Mammary epithelial cell (primary cell): ENCODE measurements at regions of chr1 and their contacts with region 1.

Region 1: DNA sequence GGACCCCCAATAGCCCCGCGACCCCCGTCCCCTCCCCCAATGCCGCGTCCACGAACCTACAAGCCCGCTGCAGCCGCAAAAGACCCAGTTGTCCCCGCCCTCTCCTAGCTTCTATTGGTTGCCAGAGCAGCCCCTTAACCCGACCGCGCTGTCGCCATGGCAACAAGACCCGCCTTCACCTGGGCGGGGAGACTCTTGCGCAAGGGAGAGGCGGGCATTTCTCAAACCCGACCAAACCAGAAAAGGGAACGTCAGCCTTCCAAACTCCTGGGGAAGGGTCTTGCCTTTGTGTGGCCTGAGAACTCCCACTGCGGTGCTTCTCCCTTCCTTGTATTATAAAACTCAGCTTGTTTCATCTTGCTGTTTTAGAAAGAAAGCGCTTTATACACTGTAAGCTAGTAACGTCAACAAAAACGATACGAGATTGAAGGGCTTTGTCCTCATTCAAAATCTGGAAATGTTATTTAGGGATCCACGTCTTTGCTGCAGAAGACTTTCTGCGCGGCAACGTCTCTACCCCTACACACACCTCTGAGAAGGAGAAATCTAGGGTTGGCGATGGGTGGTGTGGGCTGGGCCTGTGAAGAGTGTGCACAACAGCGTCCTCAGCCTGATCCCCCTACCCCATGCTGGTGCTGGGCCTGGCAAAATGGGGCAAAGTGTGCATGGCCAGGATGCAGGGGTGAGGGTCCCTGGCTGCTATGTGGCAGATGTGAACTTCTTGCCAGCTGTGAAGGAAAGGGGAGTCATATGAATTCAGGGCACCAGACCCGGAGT is at the start of gene TMEM9:
- DNase-seq: peak; percentile 84
- H3K4me3 ChIP-seq: peak within 1 kb of the TSS; percentile 39 to 79 (median 67)
- H3K27ac ChIP-seq: no peak within 1 kb of the TSS
- H3K4me1 ChIP-seq: peaks cover 12% of the 10 kb centered on the region
- H3K27me3 ChIP-seq: no peaks in the 10 kb centered on the region
- CTCF ChIP-seq: no peak
- total RNA-seq, gene TMEM9: 54.2 to 65.3 TPM

Region 2: GRCh38 chr1:200866521-200866920 is 288.1 kb before region 1 on chr1:
- CTCF ChIA-PET with region 1: no interaction called
- dilution Hi-C with region 1: no loop called
- in situ Hi-C with region 1: no loop called
- intact Hi-C with region 1: no loop called
- DNase-seq: no peak
- H3K4me3 ChIP-seq: no peak overlapping the region
- H3K27ac ChIP-seq: no peak overlapping the region
- H3K4me1 ChIP-seq: no peaks in the 10 kb centered on the region
- H3K27me3 ChIP-seq: no peaks in the 10 kb centered on the region
- CTCF ChIP-seq: no peak

Region 3: GRCh38 chr1:201077736-201078135 is 76.8 kb before region 1 on chr1:
- CTCF ChIA-PET with region 1: no interaction called
- dilution Hi-C with region 1: loop called (anchors 5 kb)
- in situ Hi-C with region 1: no loop called
- intact Hi-C with region 1: no loop called
- DNase-seq: no peak
- H3K4me3 ChIP-seq: no peak overlapping the region
- H3K27ac ChIP-seq: no peak overlapping the region
- H3K4me1 ChIP-seq: no peaks in the 10 kb centered on the region
- H3K27me3 ChIP-seq: peaks cover 2% of the 10 kb centered on the region
- CTCF ChIP-seq: no peak

Region 4: DNA sequence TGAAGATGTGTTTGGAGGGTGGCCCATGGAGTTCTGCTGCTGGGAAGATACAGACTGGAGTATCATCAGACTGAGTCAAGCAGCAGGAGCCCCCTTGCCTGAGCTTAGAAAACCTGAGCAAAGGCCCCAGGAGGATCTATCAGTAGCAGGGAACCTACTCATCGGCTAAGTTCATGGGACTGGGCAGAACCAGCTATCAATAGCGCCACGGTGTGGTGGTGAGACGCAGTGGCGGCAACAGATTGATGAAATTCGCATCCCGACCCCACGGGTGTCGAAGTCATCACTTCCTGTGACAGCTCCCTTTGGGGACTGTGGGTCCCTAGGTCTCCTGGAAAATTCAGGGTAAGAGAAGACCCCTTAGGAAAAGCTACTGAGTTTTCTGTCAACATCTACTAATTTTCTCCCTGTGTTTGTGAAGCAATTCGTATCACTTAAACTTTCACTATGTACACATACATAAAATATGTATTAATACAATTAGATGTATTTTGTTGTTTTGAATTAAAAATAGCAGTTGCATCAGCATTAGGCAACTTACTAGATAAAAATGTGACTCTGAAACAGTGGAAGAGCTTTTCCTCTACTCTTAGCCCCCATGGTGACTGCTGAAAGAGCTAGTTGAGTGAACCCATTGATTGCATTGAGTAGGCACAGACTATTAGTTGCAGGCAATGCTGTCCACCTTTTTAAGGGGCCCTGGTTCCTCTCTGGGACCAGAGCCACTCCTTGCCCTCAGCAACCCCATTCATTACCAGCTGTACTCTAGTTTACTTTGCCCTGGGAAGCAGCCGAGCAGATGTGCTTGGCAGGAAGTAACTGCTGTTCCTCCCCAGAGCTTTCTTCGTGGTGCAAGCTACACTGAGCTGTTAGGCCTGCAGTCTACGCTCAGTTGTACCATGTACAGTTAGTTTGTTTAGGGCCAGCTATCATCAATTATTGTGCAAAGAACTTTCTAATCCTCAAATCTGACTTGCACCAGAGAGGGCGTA is 35.1 kb before region 1 on chr1:
- CTCF ChIA-PET with region 1: no interaction called
- dilution Hi-C with region 1: no loop called
- in situ Hi-C with region 1: no loop called
- intact Hi-C with region 1: no loop called
- DNase-seq: no peak
- H3K4me3 ChIP-seq: no peak overlapping the region
- H3K27ac ChIP-seq: no peak overlapping the region
- H3K4me1 ChIP-seq: peaks cover 3% of the 10 kb centered on the region
- H3K27me3 ChIP-seq: no peaks in the 10 kb centered on the region
- CTCF ChIP-seq: peak; percentile 60 to 71

Region 5: DNA sequence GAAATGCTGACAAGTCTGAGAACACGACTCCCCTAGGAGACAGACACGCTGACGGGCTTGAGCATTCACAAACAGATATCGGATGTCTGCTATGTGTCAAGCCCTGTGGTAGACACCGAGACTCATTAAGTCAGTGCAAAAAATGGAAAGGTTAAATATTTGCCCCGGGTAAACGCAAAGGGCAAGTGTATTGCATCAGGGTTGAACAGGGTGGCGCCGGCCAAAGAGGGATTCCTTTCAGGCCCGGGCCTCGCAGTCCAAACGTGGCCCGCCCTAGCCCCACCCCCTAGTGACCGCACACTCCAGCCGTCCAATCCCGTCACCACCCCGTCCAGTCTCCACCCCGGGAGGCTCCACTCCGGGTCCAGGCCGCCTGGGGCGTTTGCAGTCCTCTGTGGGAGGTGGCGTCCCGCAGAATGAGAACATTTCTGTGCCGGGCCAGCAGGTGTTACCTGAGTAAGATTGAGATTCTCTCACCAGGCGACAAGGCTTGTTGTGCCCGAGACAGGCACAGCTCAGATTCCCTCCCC is 16.0 kb after region 1 on chr1:
- CTCF ChIA-PET with region 1: no interaction called
- dilution Hi-C with region 1: no loop called
- in situ Hi-C with region 1: no loop called
- intact Hi-C with region 1: loop called (anchors 2 kb)
- DNase-seq: peak; percentile 92
- H3K4me3 ChIP-seq: peak overlapping the region; percentile 44 to 50 (median 45)
- H3K27ac ChIP-seq: peak overlapping the region; percentile 36
- H3K4me1 ChIP-seq: peaks cover 28% of the 10 kb centered on the region
- H3K27me3 ChIP-seq: no peaks in the 10 kb centered on the region
- CTCF ChIP-seq: no peak

Region 6: DNA sequence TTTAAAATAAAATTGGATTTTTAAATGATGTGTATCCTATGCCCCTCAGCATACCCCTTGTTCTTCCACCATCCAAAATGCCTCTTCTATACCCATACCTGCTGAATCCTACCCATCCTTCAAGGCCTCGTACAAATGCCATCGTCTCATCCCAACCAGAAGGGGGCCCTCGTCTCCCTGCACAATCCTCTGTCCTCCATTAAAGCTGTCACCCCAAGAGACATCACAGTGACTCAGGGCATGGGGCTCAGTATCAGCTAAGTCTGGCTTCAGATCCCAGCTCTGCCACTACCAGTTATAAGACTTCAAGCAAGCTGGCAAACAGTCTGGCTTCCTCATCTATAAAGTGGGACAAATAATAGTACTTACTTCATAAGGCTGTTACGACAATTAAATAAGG is 59.9 kb after region 1 on chr1:
- CTCF ChIA-PET with region 1: no interaction called
- dilution Hi-C with region 1: no loop called
- in situ Hi-C with region 1: no loop called
- intact Hi-C with region 1: no loop called
- DNase-seq: no peak
- H3K4me3 ChIP-seq: no peak overlapping the region
- H3K27ac ChIP-seq: no peak overlapping the region
- H3K4me1 ChIP-seq: no peaks in the 10 kb centered on the region
- H3K27me3 ChIP-seq: no peaks in the 10 kb centered on the region
- CTCF ChIP-seq: peak; percentile 9 to 16

Region 7: GRCh38 chr1:201696217-201696761 is 541.7 kb after region 1 on chr1:
- CTCF ChIA-PET with region 1: no interaction called
- dilution Hi-C with region 1: no loop called
- in situ Hi-C with region 1: no loop called
- intact Hi-C with region 1: no loop called
- DNase-seq: peak; percentile 76
- H3K4me3 ChIP-seq: no peak overlapping the region
- H3K27ac ChIP-seq: peak overlapping the region; percentile 10
- H3K4me1 ChIP-seq: peaks cover 15% of the 10 kb centered on the region
- H3K27me3 ChIP-seq: no peaks in the 10 kb centered on the region
- CTCF ChIP-seq: peak in 1 of 2 donors; percentile 16